Activated naive CD4-positive, alpha-beta T cell treated with anti-CD3 and anti-CD28 coated beads, Interleukin-2, amount 10 ng/mL, durations not matched to agents 7 days and 5 days (primary cell): ENCODE measurements at regions of chr12 and their contacts with region 1.

Region 1: DNA sequence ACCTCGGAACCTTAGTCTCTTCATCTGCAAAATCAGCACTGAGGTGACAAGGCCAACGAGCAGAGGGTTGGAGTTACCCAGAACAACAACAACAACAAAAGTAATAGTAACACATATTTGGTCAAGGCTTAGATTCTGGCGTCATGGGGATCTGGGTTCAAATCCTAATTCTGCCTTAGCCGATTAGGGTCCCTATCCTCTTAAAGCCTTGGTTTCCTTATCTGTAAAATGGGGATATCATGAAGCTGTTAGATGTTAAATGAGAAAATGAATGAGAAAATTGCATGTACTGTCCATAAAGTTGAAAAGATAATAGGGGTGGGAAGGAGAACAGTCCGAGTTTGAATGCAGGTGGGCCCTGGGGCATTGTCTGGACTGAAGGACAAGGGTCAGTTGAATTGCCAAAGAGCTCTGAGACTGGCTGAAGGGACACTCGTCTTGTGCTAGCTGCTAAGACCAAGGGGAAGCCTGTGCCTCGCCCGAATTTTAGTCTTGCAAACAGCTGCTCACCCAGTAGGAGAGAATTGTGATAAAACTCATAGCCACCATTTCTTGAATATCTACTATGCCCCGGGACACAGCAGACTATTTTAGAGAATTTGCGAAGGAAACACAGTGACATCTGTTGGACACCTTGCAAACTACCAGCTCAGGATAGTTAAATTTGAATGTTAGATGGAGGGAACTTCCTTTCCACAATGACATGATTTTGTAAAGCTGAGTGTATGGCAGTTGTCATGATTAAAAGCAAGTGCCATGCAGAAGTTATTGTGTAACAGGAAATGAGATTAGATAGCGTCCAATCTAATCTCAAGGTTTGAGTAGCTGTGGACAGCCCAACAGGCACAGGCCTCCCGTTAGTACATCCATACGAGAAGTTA is 6.8 kb upstream of the HNF1A start:
- DNase-seq: peak; percentile 55
- H3K4me3 Mint-ChIP-seq: no peak overlapping the region
- H3K27ac Mint-ChIP-seq: no peak overlapping the region
- H3K4me1 Mint-ChIP-seq: peaks cover 8% of the 10 kb centered on the region
- H3K27me3 Mint-ChIP-seq: peaks cover 14% of the 10 kb centered on the region

Region 2: GRCh38 chr12:120580787-120581723 is 390.5 kb before region 1 on chr12 and contains the start of gene POP5:
- CTCF ChIA-PET with region 1: interaction called, 25 read pairs
- DNase-seq: peak; percentile 97
- H3K4me3 Mint-ChIP-seq: peak within 1 kb of the TSS; percentile 99
- H3K27ac Mint-ChIP-seq: peak within 1 kb of the TSS; percentile 89
- H3K4me1 Mint-ChIP-seq: peaks cover 49% of the 10 kb centered on the region
- H3K27me3 Mint-ChIP-seq: peaks cover 33% of the 10 kb centered on the region

Region 3: GRCh38 chr12:120750806-120751205 is 220.7 kb before region 1 on chr12:
- CTCF ChIA-PET with region 1: interaction called, 10 read pairs
- DNase-seq: no peak
- H3K4me3 Mint-ChIP-seq: no peak overlapping the region
- H3K27ac Mint-ChIP-seq: no peak overlapping the region
- H3K4me1 Mint-ChIP-seq: no peaks in the 10 kb centered on the region
- H3K27me3 Mint-ChIP-seq: peaks cover 22% of the 10 kb centered on the region

Region 4: DNA sequence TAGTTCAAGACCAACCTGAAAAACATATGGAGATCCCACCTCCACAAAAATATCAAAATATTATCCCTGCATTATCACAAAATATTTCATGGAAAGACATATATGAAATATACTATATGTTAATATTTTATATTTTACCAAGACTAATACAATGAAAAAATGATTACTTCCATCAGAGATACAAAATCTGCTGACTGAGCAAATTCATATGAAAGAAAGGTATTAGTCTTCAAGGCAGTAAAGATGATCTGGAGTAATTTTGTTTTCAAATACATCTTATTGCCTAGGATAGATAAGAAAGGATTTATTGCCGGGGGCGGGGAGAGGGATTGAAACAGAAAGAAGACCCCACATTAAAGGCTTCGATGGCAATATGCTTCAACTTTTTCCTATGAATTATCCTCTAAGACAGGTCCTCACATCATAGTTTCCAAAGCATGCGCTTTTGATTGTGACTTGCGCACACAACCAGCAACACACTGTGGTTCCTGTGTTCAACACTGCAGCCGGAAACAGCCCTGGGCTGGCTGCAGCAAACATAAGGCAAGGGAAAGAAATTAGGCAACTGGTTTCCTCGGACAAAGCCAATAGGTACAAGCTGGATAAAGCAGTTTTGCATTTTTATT is 150.5 kb before region 1 on chr12:
- CTCF ChIA-PET with region 1: no interaction called
- DNase-seq: peak; percentile 37
- H3K4me3 Mint-ChIP-seq: no peak overlapping the region
- H3K27ac Mint-ChIP-seq: no peak overlapping the region
- H3K4me1 Mint-ChIP-seq: peaks cover 10% of the 10 kb centered on the region
- H3K27me3 Mint-ChIP-seq: no peaks in the 10 kb centered on the region

Region 5: GRCh38 chr12:120856980-120857379 is 114.6 kb before region 1 on chr12:
- CTCF ChIA-PET with region 1: interaction called, 12 read pairs
- DNase-seq: no peak
- H3K4me3 Mint-ChIP-seq: no peak overlapping the region
- H3K27ac Mint-ChIP-seq: no peak overlapping the region
- H3K4me1 Mint-ChIP-seq: peaks cover 38% of the 10 kb centered on the region
- H3K27me3 Mint-ChIP-seq: no peaks in the 10 kb centered on the region

Region 6: GRCh38 chr12:120939523-120939922 is 32.0 kb before region 1 on chr12:
- CTCF ChIA-PET with region 1: interaction called, 13 read pairs
- DNase-seq: no peak
- H3K4me3 Mint-ChIP-seq: no peak overlapping the region
- H3K27ac Mint-ChIP-seq: no peak overlapping the region
- H3K4me1 Mint-ChIP-seq: peaks cover under 1% of the 10 kb centered on the region
- H3K27me3 Mint-ChIP-seq: peaks cover 51% of the 10 kb centered on the region

Region 7: DNA sequence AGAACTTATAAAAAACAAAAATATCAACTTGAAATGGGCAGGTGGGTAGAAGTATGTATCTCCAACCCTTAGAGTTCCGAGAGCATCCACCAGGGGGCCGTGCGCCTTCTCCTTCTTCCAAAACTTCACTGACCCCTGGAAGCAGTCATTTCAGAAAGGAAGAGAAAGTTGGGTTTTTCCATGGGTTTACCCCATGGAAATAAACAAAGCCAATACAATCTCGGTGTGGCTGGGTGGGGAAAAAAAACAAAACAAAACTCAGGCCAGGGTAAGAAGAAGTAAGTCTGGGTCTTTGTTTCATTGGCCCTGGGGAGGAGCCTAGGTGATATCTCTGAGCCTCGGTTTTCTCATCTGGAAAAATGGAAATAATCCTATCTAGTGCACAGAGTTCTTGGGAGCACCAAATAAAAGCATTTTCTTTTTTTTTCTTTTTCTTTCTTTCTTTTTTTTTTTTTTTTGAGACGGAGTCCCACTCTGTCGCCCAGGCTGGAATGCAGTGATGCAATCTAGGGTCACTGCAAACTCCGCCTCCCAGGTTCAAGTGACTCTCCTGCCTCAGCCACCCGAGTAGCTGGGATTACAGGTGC is 26.8 kb before region 1 on chr12:
- CTCF ChIA-PET with region 1: interaction called, 16 read pairs
- DNase-seq: peak; percentile 77
- H3K4me3 Mint-ChIP-seq: no peak overlapping the region
- H3K27ac Mint-ChIP-seq: no peak overlapping the region
- H3K4me1 Mint-ChIP-seq: peaks cover 3% of the 10 kb centered on the region
- H3K27me3 Mint-ChIP-seq: peaks cover 24% of the 10 kb centered on the region

Region 8: GRCh38 chr12:121287267-121287954 is 315.9 kb after region 1 on chr12:
- CTCF ChIA-PET with region 1: no interaction called
- DNase-seq: no peak
- H3K4me3 Mint-ChIP-seq: no peak overlapping the region
- H3K27ac Mint-ChIP-seq: no peak overlapping the region
- H3K4me1 Mint-ChIP-seq: peaks cover 24% of the 10 kb centered on the region
- H3K27me3 Mint-ChIP-seq: no peaks in the 10 kb centered on the region